H1 (cell line): ENCODE measurements at regions of chr14 and their contacts with region 1.

Region 1: DNA sequence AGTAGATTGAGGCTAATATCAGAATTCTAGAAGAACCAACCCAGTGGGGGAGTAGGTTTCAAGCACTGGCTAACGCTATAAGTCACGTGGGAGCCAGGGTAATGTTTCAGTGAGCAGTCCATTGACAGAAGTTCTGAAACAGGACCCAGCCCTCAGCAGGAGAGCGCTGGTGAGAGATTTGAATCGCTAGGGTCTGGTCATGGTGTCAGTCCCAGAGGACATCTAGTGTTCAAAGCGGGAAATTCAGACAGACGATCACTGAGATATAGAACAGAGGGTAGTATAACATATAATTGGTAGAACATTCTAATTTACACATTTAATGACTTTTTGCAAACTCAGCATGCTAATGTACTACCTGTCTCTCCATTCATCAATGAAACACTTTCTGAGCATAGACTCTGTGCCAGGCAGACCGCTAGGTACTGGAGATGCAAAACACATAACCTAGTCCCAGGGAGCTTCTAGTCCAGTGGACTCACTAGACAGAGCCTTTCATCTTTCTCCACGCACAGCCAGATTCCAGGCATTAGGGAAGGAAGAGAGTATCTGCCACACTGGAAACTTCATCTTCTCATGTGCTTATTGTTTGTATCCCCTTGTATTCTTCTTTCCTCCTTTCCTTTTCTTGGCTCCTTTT is 35.4 kb upstream of the RNASE3 start:
- DNase-seq: peak; percentile 29 to 66
- H3K4me3 ChIP-seq: no peak overlapping the region
- H3K27ac ChIP-seq: no peak overlapping the region
- H3K4me1 ChIP-seq: peaks cover 0 to 4% (median 2%) of the 10 kb centered on the region in 4 experiments; a peak in 2 of 7 replicates
- H3K27me3 ChIP-seq: no peaks in the 10 kb centered on the region; a peak in 1 of 7 replicates
- CTCF ChIP-seq: peak; percentile 16 to 71 (median 70)
- EP300 ChIP-seq: no peak
- POLR2A ChIP-seq: no peak
- RAD21 ChIP-seq: peak; percentile 85 to 91

Region 2: DNA sequence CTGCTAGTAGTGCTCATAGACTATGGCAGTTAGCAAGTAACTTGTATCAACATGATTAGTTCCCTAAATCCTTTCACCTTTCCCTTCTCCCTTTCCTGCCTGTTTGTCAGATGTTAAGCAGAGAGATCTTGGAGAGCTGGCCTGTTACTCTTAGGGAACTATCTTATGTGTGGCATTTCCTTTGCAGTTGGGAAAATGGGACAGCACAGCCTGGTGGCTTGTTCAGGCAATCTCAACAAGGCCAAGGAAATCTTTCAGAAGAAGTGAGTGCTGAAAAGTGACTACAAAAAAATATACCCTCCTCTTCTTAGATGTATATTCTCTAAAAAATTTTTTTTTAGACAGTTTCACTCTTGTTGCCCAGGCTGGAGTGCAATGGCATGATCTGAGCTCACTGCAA is 504.9 kb before region 1 on chr14:
- CTCF ChIA-PET with region 1: no interaction called
- POLR2A ChIA-PET with region 1: no interaction called
- DNase-seq: no peak
- H3K4me3 ChIP-seq: no peak overlapping the region
- H3K27ac ChIP-seq: no peak overlapping the region
- H3K4me1 ChIP-seq: no peaks in the 10 kb centered on the region
- H3K27me3 ChIP-seq: no peaks in the 10 kb centered on the region
- CTCF ChIP-seq: no peak
- EP300 ChIP-seq: no peak
- POLR2A ChIP-seq: no peak
- RAD21 ChIP-seq: no peak

Region 3: GRCh38 chr14:20682435-20683124 is 173.2 kb before region 1 on chr14:
- CTCF ChIA-PET with region 1: interaction called, 10 read pairs
- POLR2A ChIA-PET with region 1: no interaction called
- DNase-seq: peak in 1 of 2 experiments; percentile 76
- H3K4me3 ChIP-seq: peak overlapping the region; percentile 67 to 99 (median 98)
- H3K27ac ChIP-seq: peak overlapping the region; percentile 62; the same call in 1 of the 2 replicates
- H3K4me1 ChIP-seq: peaks cover 0 to 6% (median 4%) of the 10 kb centered on the region in 4 experiments; a peak in 5 of 7 replicates
- H3K27me3 ChIP-seq: no peaks in the 10 kb centered on the region
- CTCF ChIP-seq: no peak
- EP300 ChIP-seq: no peak
- POLR2A ChIP-seq: peak; percentile 42 to 60
- RAD21 ChIP-seq: no peak

Region 4: GRCh38 chr14:20697273-20698017 is 158.3 kb before region 1 on chr14:
- CTCF ChIA-PET with region 1: interaction called, 52 read pairs
- POLR2A ChIA-PET with region 1: interaction called, 3 read pairs
- DNase-seq: peak in 1 of 2 experiments; percentile 77
- H3K4me3 ChIP-seq: no peak overlapping the region
- H3K27ac ChIP-seq: no peak overlapping the region
- H3K4me1 ChIP-seq: no peaks in the 10 kb centered on the region; a peak in 1 of 7 replicates
- H3K27me3 ChIP-seq: no peaks in the 10 kb centered on the region
- CTCF ChIP-seq: peak; percentile 76 to 90 (median 87)
- EP300 ChIP-seq: no peak
- POLR2A ChIP-seq: no peak
- RAD21 ChIP-seq: peak; percentile 97 to 98

Region 5: GRCh38 chr14:20757965-20758364 is 97.8 kb before region 1 on chr14:
- CTCF ChIA-PET with region 1: interaction called, 10 read pairs
- POLR2A ChIA-PET with region 1: no interaction called
- DNase-seq: peak in 1 of 2 experiments; percentile 63
- H3K4me3 ChIP-seq: no peak overlapping the region
- H3K27ac ChIP-seq: no peak overlapping the region
- H3K4me1 ChIP-seq: peaks cover 0 to 9% (median 2%) of the 10 kb centered on the region in 4 experiments; a peak in 6 of 7 replicates
- H3K27me3 ChIP-seq: no peaks in the 10 kb centered on the region
- CTCF ChIP-seq: peak in 2 of 3 experiments; percentile 59 to 61; a peak in 3 of 4 replicates
- EP300 ChIP-seq: no peak
- POLR2A ChIP-seq: no peak
- RAD21 ChIP-seq: peak; percentile 40 to 61

Region 6: GRCh38 chr14:20866963-20867362 is 11.2 kb after region 1 on chr14:
- CTCF ChIA-PET with region 1: interaction called, 74 read pairs
- POLR2A ChIA-PET with region 1: no interaction called
- DNase-seq: no peak
- H3K4me3 ChIP-seq: no peak overlapping the region
- H3K27ac ChIP-seq: no peak overlapping the region
- H3K4me1 ChIP-seq: no peaks in the 10 kb centered on the region
- H3K27me3 ChIP-seq: no peaks in the 10 kb centered on the region
- CTCF ChIP-seq: peak; percentile 33 to 71 (median 70)
- EP300 ChIP-seq: no peak
- POLR2A ChIP-seq: no peak
- RAD21 ChIP-seq: peak; percentile 69 to 75

Region 7: DNA sequence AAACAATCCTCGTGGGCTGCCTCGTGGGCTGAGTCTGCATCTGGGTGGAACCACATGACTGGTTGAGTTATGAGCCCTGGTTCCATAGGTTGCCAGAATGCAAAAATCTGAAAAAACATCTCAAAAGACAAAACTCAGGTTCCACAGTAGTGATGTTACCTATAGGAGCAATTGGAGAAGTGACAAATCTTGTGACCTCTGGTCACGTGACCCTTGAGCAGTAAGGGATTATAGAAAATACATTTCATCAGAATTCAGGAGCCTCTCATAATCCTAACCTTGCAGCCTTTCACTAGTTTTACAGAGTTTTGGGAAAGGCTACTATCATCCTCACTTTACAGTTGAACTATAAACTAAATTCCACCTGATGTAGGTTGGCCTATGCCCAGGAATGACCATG is 22.9 kb after region 1 on chr14:
- CTCF ChIA-PET with region 1: interaction called, 74 read pairs
- POLR2A ChIA-PET with region 1: interaction called, 4 read pairs
- DNase-seq: no peak
- H3K4me3 ChIP-seq: no peak overlapping the region
- H3K27ac ChIP-seq: no peak overlapping the region
- H3K4me1 ChIP-seq: no peaks in the 10 kb centered on the region
- H3K27me3 ChIP-seq: no peaks in the 10 kb centered on the region; a peak in 4 of 7 replicates
- CTCF ChIP-seq: no peak
- EP300 ChIP-seq: no peak
- POLR2A ChIP-seq: no peak
- RAD21 ChIP-seq: no peak

Region 8: GRCh38 chr14:20970983-20971704 is 115.4 kb after region 1 on chr14:
- CTCF ChIA-PET with region 1: interaction called, 22 read pairs
- POLR2A ChIA-PET with region 1: interaction called, 3 read pairs
- DNase-seq: peak; percentile 82 to 94
- H3K4me3 ChIP-seq: peak overlapping the region; percentile 47 to 88 (median 75)
- H3K27ac ChIP-seq: peak overlapping the region; percentile 39; the same call in 1 of the 2 replicates
- H3K4me1 ChIP-seq: peaks cover 0 to 2% (median under 1%) of the 10 kb centered on the region in 4 experiments; a peak in 2 of 7 replicates
- H3K27me3 ChIP-seq: peaks cover 0 to 3% (median 1%) of the 10 kb centered on the region in 4 experiments; a peak in 2 of 7 replicates
- CTCF ChIP-seq: peak; percentile 95 to 98 (median 96)
- EP300 ChIP-seq: peak in 1 of 2 experiments; percentile 84; a peak in 1 of 3 replicates
- POLR2A ChIP-seq: peak; percentile 46 to 47; a peak in 2 of 3 replicates
- RAD21 ChIP-seq: peak; percentile 76 to 81

Region 9: GRCh38 chr14:21191809-21192446 is 336.2 kb after region 1 on chr14:
- CTCF ChIA-PET with region 1: no interaction called
- POLR2A ChIA-PET with region 1: no interaction called
- DNase-seq: peak; percentile 82 to 86
- H3K4me3 ChIP-seq: peak overlapping the region in 3 of 4 experiments; percentile 18 to 46 (median 32); a peak in 6 of 8 replicates
- H3K27ac ChIP-seq: no peak overlapping the region
- H3K4me1 ChIP-seq: peaks cover 4 to 8% (median 6%) of the 10 kb centered on the region in 4 experiments; a peak in 6 of 7 replicates
- H3K27me3 ChIP-seq: no peaks in the 10 kb centered on the region; a peak in 1 of 7 replicates
- CTCF ChIP-seq: no peak
- EP300 ChIP-seq: no peak
- POLR2A ChIP-seq: peak in 1 of 2 experiments; percentile 48; a peak in 1 of 3 replicates
- RAD21 ChIP-seq: no peak